ENCODE measurements at regions of chr9 and their contacts with region 1.

Region 1: DNA sequence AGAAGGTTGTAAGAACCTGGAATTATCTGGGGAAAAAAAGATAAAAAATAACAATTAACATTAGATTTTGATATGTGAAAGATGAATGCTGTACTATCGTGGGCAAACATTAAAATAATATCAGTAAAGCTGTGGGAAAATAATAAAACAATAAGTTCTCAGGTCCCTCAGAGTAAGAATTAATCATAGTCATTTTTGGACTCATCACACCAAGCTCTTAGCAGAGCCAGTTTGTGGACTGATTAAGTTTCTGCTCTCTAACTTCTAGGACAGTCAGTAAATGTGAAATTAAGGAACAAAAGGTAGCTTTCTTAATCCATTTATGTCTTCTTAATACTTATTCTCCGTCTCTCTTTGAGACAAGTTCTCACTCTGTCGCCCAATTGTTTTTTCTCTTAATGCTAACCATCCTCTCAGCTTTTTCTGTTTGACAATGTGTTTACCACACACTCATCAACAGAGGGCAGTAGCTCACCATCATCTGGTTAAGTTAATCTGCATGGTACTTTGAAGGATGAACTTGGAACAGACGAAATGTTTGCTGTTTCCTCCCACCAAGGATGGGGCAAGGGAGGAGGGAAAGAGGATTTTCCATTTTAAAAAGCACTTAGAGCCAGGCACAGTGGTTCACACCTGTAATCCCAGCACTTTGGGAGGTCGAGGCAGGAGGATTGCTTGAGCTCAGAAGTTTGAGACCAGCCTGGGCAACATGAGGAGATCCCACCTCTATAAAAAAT is 5.3 kb upstream of the ACO1 start:
- DNase-seq: peak; percentile 85
- ATAC-seq: peak; percentile 78
- H3K4me3 ChIP-seq: no peak overlapping the region
- H3K27ac ChIP-seq: no peak overlapping the region
- H3K4me1 ChIP-seq: peaks cover 4% of the 10 kb centered on the region
- H3K27me3 ChIP-seq: peaks cover 2% of the 10 kb centered on the region; the same call in 1 of the 2 replicates
- CTCF ChIP-seq: peak; percentile 95
- POLR2A ChIP-seq: 0 out of 2 replicates have a peak, but pooled peaks have one; percentile 34
- RAD21 ChIP-seq: peak; percentile 97

Region 2: GRCh38 chr9:32395490-32396216 is 16.5 kb after region 1 on chr9:
- CTCF ChIA-PET with region 1: interaction called, 10 read pairs
- POLR2A ChIA-PET with region 1: interaction called, 3 read pairs
- dilution Hi-C with region 1: no loop called
- in situ Hi-C with region 1: no loop called
- intact Hi-C with region 1: loop called (anchors 1 kb)
- DNase-seq: peak; percentile 98
- ATAC-seq: peak; percentile 87
- H3K4me3 ChIP-seq: no peak overlapping the region
- H3K27ac ChIP-seq: peak overlapping the region; percentile 100
- H3K4me1 ChIP-seq: peaks cover 36% of the 10 kb centered on the region
- H3K27me3 ChIP-seq: no peaks in the 10 kb centered on the region
- CTCF ChIP-seq: peak; percentile 47
- POLR2A ChIP-seq: no peak
- RAD21 ChIP-seq: peak; percentile 40

Region 3: GRCh38 chr9:32442433-32442832 is 63.3 kb after region 1 on chr9:
- CTCF ChIA-PET with region 1: interaction called, 10 read pairs
- POLR2A ChIA-PET with region 1: no interaction called
- dilution Hi-C with region 1: no loop called
- in situ Hi-C with region 1: no loop called
- intact Hi-C with region 1: no loop called
- DNase-seq: no peak
- ATAC-seq: no peak
- H3K4me3 ChIP-seq: no peak overlapping the region
- H3K27ac ChIP-seq: no peak overlapping the region
- H3K4me1 ChIP-seq: no peaks in the 10 kb centered on the region
- H3K27me3 ChIP-seq: no peaks in the 10 kb centered on the region
- CTCF ChIP-seq: no peak
- POLR2A ChIP-seq: no peak
- RAD21 ChIP-seq: no peak

Region 4: GRCh38 chr9:32526041-32526706 is 147.0 kb after region 1 on chr9 and contains the start of gene RIGI:
- CTCF ChIA-PET with region 1: interaction called, 16 read pairs
- POLR2A ChIA-PET with region 1: no interaction called
- dilution Hi-C with region 1: no loop called
- in situ Hi-C with region 1: no loop called
- intact Hi-C with region 1: loop called (anchors 1 kb)
- DNase-seq: peak; percentile 93
- ATAC-seq: peak; percentile 95
- H3K4me3 ChIP-seq: peak within 1 kb of the TSS; percentile 86
- H3K27ac ChIP-seq: peak within 1 kb of the TSS; percentile 91
- H3K4me1 ChIP-seq: peaks cover 3% of the 10 kb centered on the region
- H3K27me3 ChIP-seq: no peaks in the 10 kb centered on the region
- CTCF ChIP-seq: peak; percentile 32; the same call in 1 of the 2 replicates
- POLR2A ChIP-seq: peak; percentile 78
- RAD21 ChIP-seq: peak; percentile 34; the same call in 1 of the 2 replicates
- total RNA-seq, gene RIGI: 13.6 and 18.1 TPM in 2 replicates

Region 5: GRCh38 chr9:32571969-32572899 is 193.1 kb after region 1 on chr9:
- CTCF ChIA-PET with region 1: interaction called, 189 read pairs
- POLR2A ChIA-PET with region 1: interaction called, 4 read pairs
- dilution Hi-C with region 1: no loop called
- in situ Hi-C with region 1: loop called (anchors 5 kb)
- intact Hi-C with region 1: loop called (anchors 1 kb)
- DNase-seq: peak; percentile 82
- ATAC-seq: peak; percentile 81
- H3K4me3 ChIP-seq: peak overlapping the region; percentile 79
- H3K27ac ChIP-seq: peak overlapping the region; percentile 78
- H3K4me1 ChIP-seq: no peaks in the 10 kb centered on the region
- H3K27me3 ChIP-seq: no peaks in the 10 kb centered on the region
- CTCF ChIP-seq: peak; percentile 77
- POLR2A ChIP-seq: no peak
- RAD21 ChIP-seq: peak; percentile 74

Region 6: GRCh38 chr9:32589083-32589723 is 210.0 kb after region 1 on chr9:
- CTCF ChIA-PET with region 1: interaction called, 12 read pairs
- POLR2A ChIA-PET with region 1: no interaction called
- dilution Hi-C with region 1: no loop called
- in situ Hi-C with region 1: no loop called
- intact Hi-C with region 1: no loop called
- DNase-seq: peak; percentile 57
- ATAC-seq: peak; percentile 87
- H3K4me3 ChIP-seq: no peak overlapping the region
- H3K27ac ChIP-seq: no peak overlapping the region
- H3K4me1 ChIP-seq: no peaks in the 10 kb centered on the region
- H3K27me3 ChIP-seq: peaks cover 3% of the 10 kb centered on the region; the same call in 1 of the 2 replicates
- CTCF ChIP-seq: peak; percentile 55
- POLR2A ChIP-seq: no peak
- RAD21 ChIP-seq: peak; percentile 52

Region 7: DNA sequence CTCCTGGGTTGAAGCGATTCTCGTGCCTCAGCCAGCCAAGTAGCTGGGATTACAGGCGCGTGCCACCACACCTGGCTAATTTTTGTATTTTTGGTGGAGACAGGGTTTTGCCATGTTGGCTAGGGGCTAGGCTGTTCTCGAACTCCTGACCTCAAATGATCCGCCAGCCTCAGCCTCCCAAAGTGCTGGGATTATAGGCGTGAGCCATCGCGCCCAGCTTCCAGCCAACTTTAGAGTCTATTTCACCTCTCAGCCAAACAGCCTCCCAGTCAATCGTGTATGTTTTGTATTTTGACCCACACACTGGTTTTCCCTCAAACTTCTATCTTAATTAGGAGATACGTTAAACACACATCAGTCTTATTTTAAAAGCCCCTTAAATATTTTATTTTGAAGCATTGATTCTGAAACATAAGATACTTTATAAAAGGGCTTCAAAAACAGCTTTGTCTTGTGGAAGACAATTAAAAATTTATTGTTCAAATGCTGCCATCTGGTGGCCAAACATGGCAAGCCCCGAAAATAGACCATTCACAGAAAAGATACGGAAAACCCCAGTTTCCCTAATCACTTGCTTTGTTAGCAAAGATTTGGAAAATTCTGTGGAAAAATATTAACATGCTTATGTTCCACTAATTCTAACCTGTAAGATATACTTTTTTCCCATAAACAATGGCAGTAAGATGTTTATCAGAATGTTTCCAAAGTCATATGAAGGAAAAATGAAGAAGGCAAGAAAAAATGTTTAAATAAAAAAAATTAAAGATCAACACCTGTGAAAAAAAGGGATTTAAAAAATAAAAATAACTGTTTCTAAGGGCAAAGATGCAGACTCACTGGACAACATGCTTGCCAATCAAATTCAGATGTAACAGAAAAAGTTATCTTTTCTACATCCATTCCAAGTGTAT is 589.2 kb after region 1 on chr9:
- CTCF ChIA-PET with region 1: interaction called, 20 read pairs
- POLR2A ChIA-PET with region 1: no interaction called
- dilution Hi-C with region 1: no loop called
- in situ Hi-C with region 1: loop called (anchors 5 kb)
- intact Hi-C with region 1: loop called (anchors 1 kb)
- DNase-seq: peak; percentile 57
- ATAC-seq: peak; percentile 36; the same call in 1 of the 2 replicates
- H3K4me3 ChIP-seq: no peak overlapping the region
- H3K27ac ChIP-seq: no peak overlapping the region
- H3K4me1 ChIP-seq: peaks cover 3% of the 10 kb centered on the region; the same call in 1 of the 2 replicates
- H3K27me3 ChIP-seq: no peaks in the 10 kb centered on the region
- CTCF ChIP-seq: peak; percentile 84
- POLR2A ChIP-seq: no peak
- RAD21 ChIP-seq: peak; percentile 66